AG04449 (cell line): ENCODE measurements at regions of chr5 and their contacts with region 1.

Region 1: GRCh38 chr5:174951146-174951780 is 226.9 kb downstream of the MSX2 start:
- DNase-seq: peak; percentile 33
- H3K4me3 ChIP-seq: no peak overlapping the region
- CTCF ChIP-seq: peak; percentile 81

Region 2: GRCh38 chr5:174612686-174613085 is 338.6 kb before region 1 on chr5:
- CTCF ChIA-PET with region 1: no interaction called
- POLR2A ChIA-PET with region 1: no interaction called
- DNase-seq: no peak
- H3K4me3 ChIP-seq: no peak overlapping the region
- CTCF ChIP-seq: no peak

Region 3: GRCh38 chr5:175246242-175246888 is 295.1 kb after region 1 on chr5:
- CTCF ChIA-PET with region 1: no interaction called
- POLR2A ChIA-PET with region 1: no interaction called
- DNase-seq: peak; percentile 82
- H3K4me3 ChIP-seq: no peak overlapping the region; the same call in 1 of the 2 replicates
- CTCF ChIP-seq: no peak

Region 4: DNA sequence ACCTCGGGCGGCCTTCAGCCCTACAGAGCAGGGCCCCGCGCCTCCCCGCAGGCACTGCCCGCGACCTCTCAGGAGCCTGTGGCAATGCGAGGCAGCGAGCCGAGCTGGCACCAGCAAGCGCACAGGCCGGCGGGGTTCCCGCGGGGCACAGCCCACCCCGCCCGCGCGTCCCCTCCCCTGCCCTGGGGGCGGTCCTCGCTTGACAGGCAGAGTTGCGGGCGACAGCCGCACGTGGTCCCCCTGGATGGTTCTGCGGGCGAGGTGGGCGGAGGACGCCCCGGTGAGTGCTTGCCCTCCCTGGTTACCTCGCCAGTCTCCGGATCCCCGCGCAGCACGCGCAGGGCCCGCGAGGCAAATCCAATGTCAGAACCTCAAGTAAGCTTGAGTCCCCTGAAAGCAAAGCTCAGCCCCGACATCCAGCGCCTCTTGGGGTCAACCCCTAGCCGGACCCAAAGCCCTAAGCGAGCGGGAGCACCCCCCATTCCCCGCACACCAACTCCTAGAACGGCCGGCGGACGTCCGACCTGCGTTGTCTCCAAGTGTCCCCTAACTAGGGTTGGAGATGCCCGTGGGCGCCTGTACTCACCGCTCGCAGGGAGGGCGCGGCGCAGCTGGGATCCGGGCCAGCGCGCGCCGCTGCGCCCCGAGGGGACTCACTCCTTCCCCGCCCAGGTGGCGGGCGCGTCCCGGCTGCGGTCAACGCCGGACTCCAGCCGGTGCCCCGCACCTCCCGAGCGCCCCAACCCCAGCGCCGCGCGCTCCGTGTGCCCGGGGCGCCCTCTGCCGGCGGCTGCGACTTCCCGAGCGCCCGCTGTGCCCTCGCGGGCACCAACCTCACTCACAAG is 493.0 kb after region 1 on chr5 and contains the start of gene DRD1:
- CTCF ChIA-PET with region 1: interaction called, 19 read pairs
- POLR2A ChIA-PET with region 1: no interaction called
- DNase-seq: no peak
- H3K4me3 ChIP-seq: no peak within 1 kb of the TSS
- CTCF ChIP-seq: peak; percentile 55